PC-9 (cell line): ENCODE measurements at regions of chr2 and their contacts with region 1.

Region 1: GRCh38 chr2:165563468-165564225 is 94.1 kb downstream of the CSRNP3 start:
- DNase-seq: no peak
- H3K4me3 ChIP-seq: no peak overlapping the region
- H3K27ac ChIP-seq: no peak overlapping the region
- H3K4me1 ChIP-seq: no peaks in the 10 kb centered on the region
- H3K27me3 ChIP-seq: no peaks in the 10 kb centered on the region
- CTCF ChIP-seq: no peak; the same call in 1 of the 2 replicates

Region 2: DNA sequence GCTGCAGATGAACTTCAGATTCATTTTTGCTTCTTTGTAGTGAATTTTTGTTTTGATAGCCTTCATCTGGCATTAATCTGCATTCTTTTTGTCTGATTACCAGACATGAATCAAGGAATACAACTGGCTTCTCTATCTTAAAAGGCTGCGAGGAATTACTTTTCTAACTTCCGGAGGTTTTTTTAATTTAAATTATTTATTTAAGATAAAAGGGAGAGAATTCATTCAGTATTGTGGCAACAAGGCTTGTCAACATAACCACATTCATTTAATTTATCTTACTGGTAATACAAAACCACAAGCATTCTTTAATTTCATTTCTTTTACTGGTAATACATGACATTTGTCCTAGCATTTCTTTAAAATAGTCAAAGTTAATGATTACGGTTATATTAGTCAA is 58.1 kb before region 1 on chr2:
- CTCF ChIA-PET with region 1: no interaction called
- POLR2A ChIA-PET with region 1: no interaction called
- intact Hi-C with region 1: no loop called
- DNase-seq: no peak
- H3K4me3 ChIP-seq: no peak overlapping the region
- H3K27ac ChIP-seq: no peak overlapping the region
- H3K4me1 ChIP-seq: no peaks in the 10 kb centered on the region
- H3K27me3 ChIP-seq: no peaks in the 10 kb centered on the region
- CTCF ChIP-seq: no peak

Region 3: GRCh38 chr2:165594935-165595255 is 31.2 kb after region 1 on chr2:
- CTCF ChIA-PET with region 1: no interaction called
- POLR2A ChIA-PET with region 1: no interaction called
- intact Hi-C with region 1: no loop called
- DNase-seq: no peak
- H3K4me3 ChIP-seq: no peak overlapping the region
- H3K27ac ChIP-seq: no peak overlapping the region
- H3K4me1 ChIP-seq: no peaks in the 10 kb centered on the region
- H3K27me3 ChIP-seq: no peaks in the 10 kb centered on the region
- CTCF ChIP-seq: no peak

Region 4: GRCh38 chr2:165743442-165743841 is 179.8 kb after region 1 on chr2:
- CTCF ChIA-PET with region 1: no interaction called
- POLR2A ChIA-PET with region 1: no interaction called
- intact Hi-C with region 1: no loop called
- DNase-seq: no peak
- H3K4me3 ChIP-seq: no peak overlapping the region
- H3K27ac ChIP-seq: no peak overlapping the region
- H3K4me1 ChIP-seq: no peaks in the 10 kb centered on the region
- H3K27me3 ChIP-seq: no peaks in the 10 kb centered on the region
- CTCF ChIP-seq: no peak

Region 5: GRCh38 chr2:165766324-165766927 is 202.8 kb after region 1 on chr2:
- CTCF ChIA-PET with region 1: no interaction called
- POLR2A ChIA-PET with region 1: no interaction called
- intact Hi-C with region 1: loop called (anchors 10 kb)
- DNase-seq: no peak
- H3K4me3 ChIP-seq: no peak overlapping the region
- H3K27ac ChIP-seq: no peak overlapping the region
- H3K4me1 ChIP-seq: no peaks in the 10 kb centered on the region
- H3K27me3 ChIP-seq: no peaks in the 10 kb centered on the region
- CTCF ChIP-seq: no peak